ENCODE measurements at regions of chr20 and their contacts with region 1.

Region 1: GRCh38 chr20:24160563-24161375 is 172.2 kb upstream of the GGTLC1 start:
- DNase-seq: peak; percentile 13
- H3K4me3 ChIP-seq: no peak overlapping the region
- H3K27ac ChIP-seq: no peak overlapping the region
- H3K4me1 ChIP-seq: peaks cover 0 to 4% (median 0%) of the 10 kb centered on the region in 4 donors
- H3K27me3 ChIP-seq: no peaks in the 10 kb centered on the region
- CTCF ChIP-seq: peak; percentile 44 to 67 (median 54)
- EP300 ChIP-seq: no peak
- POLR2A ChIP-seq: no peak

Region 2: GRCh38 chr20:24176661-24177060 is 15.9 kb after region 1 on chr20:
- in situ Hi-C with region 1: no loop called
- intact Hi-C with region 1: no loop called
- DNase-seq: no peak
- H3K4me3 ChIP-seq: no peak overlapping the region
- H3K27ac ChIP-seq: no peak overlapping the region
- H3K4me1 ChIP-seq: no peaks in the 10 kb centered on the region
- H3K27me3 ChIP-seq: no peaks in the 10 kb centered on the region
- CTCF ChIP-seq: no peak
- EP300 ChIP-seq: no peak
- POLR2A ChIP-seq: no peak

Region 3: DNA sequence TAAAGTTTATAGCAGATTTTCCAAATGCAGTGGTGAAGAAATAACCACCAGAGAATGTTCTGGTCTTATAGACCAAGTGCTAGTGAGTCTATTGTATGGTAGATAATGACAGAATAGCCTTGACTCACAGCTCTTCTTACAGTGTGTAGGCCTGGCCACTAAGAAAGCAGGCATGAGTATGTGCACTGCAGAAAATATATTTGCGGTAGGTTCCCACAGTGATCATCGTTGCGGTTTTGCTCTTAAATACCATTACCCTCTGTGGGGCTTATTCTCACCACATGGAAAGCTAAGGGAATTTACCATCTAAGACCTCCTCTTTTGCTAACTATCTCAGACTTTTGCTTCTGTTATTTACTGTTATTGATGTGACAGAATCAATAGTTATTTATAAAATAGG is 96.4 kb after region 1 on chr20:
- in situ Hi-C with region 1: loop called in 1 of 4 experiments (anchors 25 kb)
- intact Hi-C with region 1: no loop called
- DNase-seq: no peak
- H3K4me3 ChIP-seq: no peak overlapping the region
- H3K27ac ChIP-seq: no peak overlapping the region
- H3K4me1 ChIP-seq: no peaks in the 10 kb centered on the region
- H3K27me3 ChIP-seq: no peaks in the 10 kb centered on the region
- CTCF ChIP-seq: no peak
- EP300 ChIP-seq: no peak
- POLR2A ChIP-seq: no peak

Region 4: DNA sequence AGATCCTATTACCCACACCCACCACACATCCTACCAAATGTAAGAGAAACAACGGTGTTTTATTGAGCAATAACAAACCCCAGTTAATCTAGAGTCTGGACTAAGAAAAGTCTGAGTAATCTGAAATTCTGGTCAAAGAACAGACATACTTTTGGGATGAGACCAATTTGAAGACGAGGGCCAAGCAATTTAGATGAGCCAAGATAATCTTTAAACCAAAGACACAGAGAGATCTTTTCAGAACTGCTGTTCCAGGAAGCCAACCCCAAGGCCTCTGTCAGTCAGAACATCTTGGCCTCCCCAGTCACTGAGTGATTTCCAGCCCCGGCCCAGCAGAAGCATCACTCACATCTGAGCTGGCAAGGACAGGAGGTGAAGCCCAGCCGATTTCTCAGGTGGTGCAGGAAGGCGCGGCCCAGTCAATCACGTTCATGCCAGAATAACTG is 190.2 kb after region 1 on chr20:
- in situ Hi-C with region 1: no loop called
- intact Hi-C with region 1: no loop called
- DNase-seq: no peak
- H3K4me3 ChIP-seq: no peak overlapping the region
- H3K27ac ChIP-seq: no peak overlapping the region
- H3K4me1 ChIP-seq: no peaks in the 10 kb centered on the region
- H3K27me3 ChIP-seq: no peaks in the 10 kb centered on the region
- CTCF ChIP-seq: no peak
- EP300 ChIP-seq: no peak
- POLR2A ChIP-seq: no peak